PC-3 (cell line): ENCODE measurements at regions of chr16 and their contacts with region 1.

Region 1: DNA sequence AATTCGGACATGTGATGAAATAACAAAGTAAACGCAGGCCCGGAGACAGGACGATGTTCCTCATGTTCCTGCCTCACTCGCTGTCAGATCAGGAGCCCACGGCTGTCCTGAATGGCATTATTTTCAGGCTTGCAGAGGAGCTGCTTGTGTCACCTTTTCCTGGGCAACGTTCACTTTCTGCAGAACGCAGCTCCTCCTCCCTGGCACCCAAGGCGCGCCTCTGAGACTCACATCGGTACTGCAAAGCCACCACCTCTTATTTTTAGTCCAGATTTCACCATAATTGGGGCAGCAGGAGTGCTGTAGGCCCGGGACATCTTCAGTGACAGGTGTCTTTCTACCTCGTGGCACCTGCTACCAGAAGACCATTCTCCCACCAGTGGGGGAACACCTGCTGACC is 8.0 kb upstream of the C16orf96 start:
- DNase-seq: no peak
- ATAC-seq: no peak
- H3K4me3 ChIP-seq: no peak overlapping the region
- H3K27ac ChIP-seq: no peak overlapping the region
- H3K4me1 ChIP-seq: no peaks in the 10 kb centered on the region
- H3K27me3 ChIP-seq: no peaks in the 10 kb centered on the region
- CTCF ChIP-seq: no peak

Region 2: DNA sequence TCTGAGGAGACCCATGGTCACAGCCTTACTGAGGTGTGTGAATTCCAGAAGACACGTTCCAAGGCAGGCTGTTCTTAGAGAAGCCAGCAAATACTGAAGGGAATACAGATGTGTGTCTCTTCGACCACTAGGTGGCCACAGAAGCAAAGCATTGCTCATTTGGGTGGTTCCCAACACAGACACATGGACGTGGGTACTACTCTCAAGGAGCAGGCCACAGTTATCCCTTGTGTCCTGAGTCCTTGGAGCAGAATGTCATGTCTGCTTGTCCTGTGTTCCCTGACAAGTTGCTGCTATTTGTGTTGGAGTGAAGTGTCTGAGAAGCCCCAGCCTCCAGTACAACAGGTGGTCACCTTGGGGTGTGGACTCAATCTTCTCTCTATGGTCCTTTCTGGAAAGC is 41.7 kb before region 1 on chr16:
- CTCF ChIA-PET with region 1: interaction called, 13 read pairs
- POLR2A ChIA-PET with region 1: no interaction called
- intact Hi-C with region 1: loop called (anchors 1 kb)
- DNase-seq: peak; percentile 74
- ATAC-seq: peak; percentile 95
- H3K4me3 ChIP-seq: no peak overlapping the region
- H3K27ac ChIP-seq: no peak overlapping the region
- H3K4me1 ChIP-seq: peaks cover 6% of the 10 kb centered on the region
- H3K27me3 ChIP-seq: no peaks in the 10 kb centered on the region
- CTCF ChIP-seq: peak; percentile 85

Region 3: GRCh38 chr16:4593069-4593468 is 44.9 kb after region 1 on chr16:
- CTCF ChIA-PET with region 1: no interaction called
- POLR2A ChIA-PET with region 1: no interaction called
- intact Hi-C with region 1: no loop called
- DNase-seq: no peak
- ATAC-seq: no peak
- H3K4me3 ChIP-seq: no peak overlapping the region
- H3K27ac ChIP-seq: no peak overlapping the region
- H3K4me1 ChIP-seq: no peaks in the 10 kb centered on the region
- H3K27me3 ChIP-seq: no peaks in the 10 kb centered on the region
- CTCF ChIP-seq: no peak